ENCODE measurements at regions of chr2 and their contacts with region 1.

Region 1: GRCh38 chr2:224658780-224659405 is 57.3 kb downstream of the CCDC195 start:
- DNase-seq: no peak

Region 2: GRCh38 chr2:224357098-224357901 is 301.6 kb before region 1 on chr2:
- intact Hi-C with region 1: loop called (anchors 5 kb)
- DNase-seq: peak in 31 of 42 donors; percentile 21 to 86 (median 64)